Activated CD8-positive, alpha-beta T cell treated with anti-CD3 and anti-CD28 coated beads for 36 hours (primary cell): ENCODE measurements at regions of chr6 and their contacts with region 1.

Region 1: DNA sequence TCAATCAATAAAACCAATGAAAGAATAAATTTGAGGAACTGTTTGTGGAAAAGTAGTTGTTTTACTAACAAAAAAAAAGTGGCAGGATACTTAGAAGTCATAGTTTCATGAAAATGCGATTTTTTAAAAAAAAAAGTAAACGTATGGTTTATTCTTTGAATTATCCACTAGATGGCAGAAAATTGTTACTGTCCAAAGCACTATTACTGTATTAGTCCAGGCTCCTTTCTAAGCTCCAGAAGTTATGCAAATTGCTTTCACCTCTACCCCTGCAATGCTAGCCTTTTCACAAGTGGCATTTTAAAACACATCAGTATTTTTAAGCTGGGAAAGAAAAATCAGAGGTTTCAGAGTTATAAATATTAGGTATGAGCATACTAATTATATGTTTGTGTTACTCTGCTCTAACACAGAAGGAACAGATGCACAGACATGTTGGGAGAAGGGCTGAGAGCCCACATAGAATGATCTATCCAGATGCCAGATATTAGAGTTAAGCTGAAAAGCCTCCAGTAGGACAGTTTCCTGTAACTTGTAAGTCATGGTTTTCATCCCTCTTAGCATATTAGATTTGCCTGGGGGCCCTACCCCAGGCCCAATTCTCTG is 63.9 kb downstream of the FHL5 start:
- DNase-seq: no peak
- ATAC-seq: peak; percentile 67
- H3K4me3 Mint-ChIP-seq: no peak overlapping the region
- H3K27ac Mint-ChIP-seq: no peak overlapping the region
- H3K4me1 Mint-ChIP-seq: no peaks in the 10 kb centered on the region
- H3K27me3 Mint-ChIP-seq: peaks cover 11% of the 10 kb centered on the region
- CTCF ChIP-seq: peak; percentile 43

Region 2: GRCh38 chr6:96521644-96522464 is 105.0 kb before region 1 on chr6 and contains the start of gene UFL1:
- CTCF ChIA-PET with region 1: no interaction called
- POLR2A ChIA-PET with region 1: no interaction called
- intact Hi-C with region 1: no loop called
- DNase-seq: peak; percentile 95
- ATAC-seq: peak; percentile 96
- H3K4me3 Mint-ChIP-seq: peak within 1 kb of the TSS; percentile 98
- H3K27ac Mint-ChIP-seq: peak within 1 kb of the TSS; percentile 99
- H3K4me1 Mint-ChIP-seq: peaks cover 16% of the 10 kb centered on the region
- H3K27me3 Mint-ChIP-seq: no peaks in the 10 kb centered on the region
- CTCF ChIP-seq: no peak
- total RNA-seq, gene UFL1: 28.6 to 30.8 TPM

Region 3: DNA sequence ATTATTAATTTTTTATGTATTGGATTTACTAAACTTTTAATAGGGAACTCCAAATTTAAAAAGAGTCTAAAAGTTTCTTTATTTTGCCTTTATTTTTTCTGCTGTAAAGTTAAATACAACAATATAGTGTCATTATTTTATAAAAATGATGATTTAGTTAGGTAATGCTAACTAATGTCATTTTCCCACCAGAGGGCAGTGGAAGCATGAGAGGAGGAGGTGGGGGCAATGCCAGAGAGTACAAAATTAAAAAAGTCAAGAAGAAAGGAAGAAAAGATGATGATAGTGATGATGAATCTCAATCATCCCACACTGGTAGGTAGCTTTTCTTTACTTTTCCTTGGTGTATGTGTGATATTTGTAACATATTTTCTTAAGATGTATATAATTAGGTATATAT is 84.2 kb before region 1 on chr6:
- CTCF ChIA-PET with region 1: no interaction called
- POLR2A ChIA-PET with region 1: no interaction called
- intact Hi-C with region 1: no loop called
- DNase-seq: no peak
- ATAC-seq: peak; percentile 42
- H3K4me3 Mint-ChIP-seq: no peak overlapping the region
- H3K27ac Mint-ChIP-seq: no peak overlapping the region
- H3K4me1 Mint-ChIP-seq: no peaks in the 10 kb centered on the region
- H3K27me3 Mint-ChIP-seq: no peaks in the 10 kb centered on the region
- CTCF ChIP-seq: no peak

Region 4: DNA sequence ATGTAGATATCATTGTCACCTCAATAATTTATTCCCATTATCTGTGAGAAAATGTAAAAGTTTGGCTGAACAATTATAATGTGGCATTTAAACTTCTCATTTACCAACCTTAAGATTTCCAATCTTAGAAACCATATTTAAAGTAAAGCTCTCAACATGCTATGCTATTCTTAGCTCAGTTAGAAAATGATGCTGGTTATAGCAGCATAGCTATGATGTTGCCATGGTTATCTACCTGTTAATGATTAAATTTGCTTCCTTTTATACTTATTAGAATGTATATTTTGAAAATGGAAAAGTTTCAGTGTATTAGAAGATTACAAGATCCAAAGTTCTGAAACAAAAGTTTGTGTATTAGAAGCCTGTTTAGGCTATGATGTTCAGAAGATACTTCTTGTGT is 100.3 kb after region 1 on chr6:
- CTCF ChIA-PET with region 1: no interaction called
- POLR2A ChIA-PET with region 1: no interaction called
- intact Hi-C with region 1: no loop called
- DNase-seq: no peak
- ATAC-seq: no peak
- H3K4me3 Mint-ChIP-seq: no peak overlapping the region
- H3K27ac Mint-ChIP-seq: no peak overlapping the region
- H3K4me1 Mint-ChIP-seq: no peaks in the 10 kb centered on the region
- H3K27me3 Mint-ChIP-seq: peaks cover 6% of the 10 kb centered on the region
- CTCF ChIP-seq: no peak

Region 5: DNA sequence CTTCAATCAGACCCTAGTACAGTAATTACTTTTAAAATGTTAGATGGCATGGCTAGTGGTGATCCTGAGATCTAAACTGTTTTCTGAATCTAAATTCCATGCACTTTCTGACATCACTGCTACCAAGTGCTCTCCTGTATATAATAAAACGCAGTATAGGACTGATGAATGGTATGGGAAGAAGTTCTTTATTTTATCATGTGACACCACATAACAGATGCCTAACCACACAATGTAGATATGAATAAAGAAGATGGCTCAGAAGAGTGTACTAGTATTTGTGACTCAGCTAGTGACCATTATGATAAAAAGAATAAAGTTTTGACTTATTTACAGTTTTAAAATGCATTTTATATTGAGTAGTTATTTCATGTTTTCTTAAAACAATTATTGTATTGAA is 262.3 kb after region 1 on chr6:
- CTCF ChIA-PET with region 1: interaction called, 3 read pairs
- POLR2A ChIA-PET with region 1: no interaction called
- intact Hi-C with region 1: loop called (anchors 10 kb)
- DNase-seq: no peak
- ATAC-seq: no peak
- H3K4me3 Mint-ChIP-seq: no peak overlapping the region
- H3K27ac Mint-ChIP-seq: no peak overlapping the region
- H3K4me1 Mint-ChIP-seq: peaks cover 15% of the 10 kb centered on the region
- H3K27me3 Mint-ChIP-seq: no peaks in the 10 kb centered on the region
- CTCF ChIP-seq: no peak

Region 6: DNA sequence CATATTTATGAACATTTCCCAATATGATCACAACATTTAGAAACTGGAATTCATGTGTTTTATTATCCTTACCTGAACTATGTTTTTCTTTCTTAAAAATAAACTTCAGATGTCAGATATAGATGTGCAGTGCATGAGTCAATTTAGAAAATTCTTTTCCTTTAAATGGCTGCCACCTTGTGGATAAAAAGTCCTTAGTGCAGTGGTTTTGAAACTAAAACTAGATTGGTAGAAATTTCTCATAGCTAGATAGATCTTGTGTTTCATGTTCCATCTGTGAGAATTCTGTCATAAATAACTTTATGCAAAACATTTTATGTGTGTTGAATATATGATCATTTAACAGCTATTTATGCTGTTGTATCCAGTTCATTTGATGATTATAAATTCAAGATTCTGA is 432.6 kb after region 1 on chr6:
- CTCF ChIA-PET with region 1: interaction called, 16 read pairs
- POLR2A ChIA-PET with region 1: no interaction called
- intact Hi-C with region 1: loop called (anchors 2 kb)
- DNase-seq: no peak
- ATAC-seq: peak; percentile 76
- H3K4me3 Mint-ChIP-seq: no peak overlapping the region
- H3K27ac Mint-ChIP-seq: no peak overlapping the region
- H3K4me1 Mint-ChIP-seq: peaks cover 2% of the 10 kb centered on the region
- H3K27me3 Mint-ChIP-seq: no peaks in the 10 kb centered on the region
- CTCF ChIP-seq: peak; percentile 63